Right cardiac atrium (tissue), 5 donors: ENCODE measurements at regions of chr9 and their contacts with region 1.

Region 1: GRCh38 chr9:129413537-129414376 is 207.1 kb downstream of the C9orf50 start:
- DNase-seq: peak; percentile 100
- ATAC-seq: peak; percentile 89 to 90
- H3K4me3 ChIP-seq: peak overlapping the region; percentile 66
- H3K27ac ChIP-seq: peak overlapping the region; percentile 97
- H3K4me1 ChIP-seq: peaks cover 8% of the 10 kb centered on the region
- H3K27me3 ChIP-seq: no peaks in the 10 kb centered on the region

Region 2: GRCh38 chr9:129365196-129365595 is 48.6 kb before region 1 on chr9:
- intact Hi-C with region 1: no loop called
- DNase-seq: no peak
- ATAC-seq: no peak
- H3K4me3 ChIP-seq: no peak overlapping the region
- H3K27ac ChIP-seq: no peak overlapping the region
- H3K4me1 ChIP-seq: no peaks in the 10 kb centered on the region
- H3K27me3 ChIP-seq: no peaks in the 10 kb centered on the region

Region 3: GRCh38 chr9:129473523-129474229 is 59.9 kb after region 1 on chr9:
- intact Hi-C with region 1: loop called in 1 of 4 experiments (anchors 10 kb)
- DNase-seq: peak; percentile 76 to 82 (median 78)
- ATAC-seq: peak; percentile 72 to 86
- H3K4me3 ChIP-seq: no peak overlapping the region
- H3K27ac ChIP-seq: no peak overlapping the region
- H3K4me1 ChIP-seq: no peaks in the 10 kb centered on the region
- H3K27me3 ChIP-seq: no peaks in the 10 kb centered on the region

Region 4: GRCh38 chr9:129597355-129598088 is 183.8 kb after region 1 on chr9:
- intact Hi-C with region 1: no loop called
- DNase-seq: peak; percentile 81 to 90 (median 89)
- ATAC-seq: peak; percentile 67 to 84
- H3K4me3 ChIP-seq: peak overlapping the region; percentile 48
- H3K27ac ChIP-seq: peak overlapping the region; percentile 1
- H3K4me1 ChIP-seq: peaks cover 2% of the 10 kb centered on the region
- H3K27me3 ChIP-seq: no peaks in the 10 kb centered on the region